Psoas muscle (tissue), 8 donors: ENCODE measurements at regions of chr17 and their contacts with region 1.

Region 1: GRCh38 chr17:36999471-36999870 is 50.7 kb downstream of the AATF start:
- DNase-seq: no peak
- ATAC-seq: no peak
- H3K4me3 ChIP-seq: no peak overlapping the region
- H3K27ac ChIP-seq: no peak overlapping the region
- H3K4me1 ChIP-seq: peaks cover 10% of the 10 kb centered on the region
- H3K27me3 ChIP-seq: no peaks in the 10 kb centered on the region
- CTCF ChIP-seq: no peak

Region 2: DNA sequence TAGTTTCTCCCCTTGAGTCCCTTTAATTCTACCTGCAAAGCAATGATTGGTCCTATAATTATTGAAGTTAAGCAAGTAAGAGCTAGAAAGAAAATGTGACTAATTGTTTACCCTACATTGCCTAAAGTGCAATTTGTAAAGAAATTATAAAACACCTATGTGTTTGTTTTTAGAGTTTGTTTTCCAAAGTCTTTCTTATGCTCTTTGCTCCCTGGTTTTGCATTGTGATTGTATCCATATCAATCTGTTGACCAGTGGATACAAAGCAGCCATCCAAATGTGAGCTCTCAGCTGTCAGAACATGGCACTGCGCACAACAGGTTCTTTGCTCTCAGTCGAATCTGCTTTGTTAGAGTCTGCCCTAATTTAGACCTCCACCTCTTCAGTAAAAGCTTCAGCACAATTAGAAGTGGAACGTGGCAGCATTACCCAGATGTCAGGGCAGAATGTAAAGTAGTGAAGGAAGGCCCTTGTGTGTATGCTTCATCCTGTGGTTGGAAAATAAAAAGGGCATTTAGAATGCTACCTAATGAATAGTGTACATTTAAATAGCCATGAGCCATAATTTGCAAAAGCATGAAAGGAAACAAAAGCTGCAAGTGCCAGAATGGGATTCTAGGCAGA is 19.8 kb after region 1 on chr17:
- intact Hi-C with region 1: loop called in 1 of 2 experiments (anchors 2 kb)
- DNase-seq: no peak
- ATAC-seq: no peak
- H3K4me3 ChIP-seq: no peak overlapping the region
- H3K27ac ChIP-seq: no peak overlapping the region
- H3K4me1 ChIP-seq: no peaks in the 10 kb centered on the region
- H3K27me3 ChIP-seq: no peaks in the 10 kb centered on the region
- CTCF ChIP-seq: no peak